Activated CD8-positive, alpha-beta memory T cell treated with anti-CD3 and anti-CD28 coated beads, Interleukin-2, amount 10 ng/mL, durations not matched to agents 7 days and 5 days (primary cell): ENCODE measurements at regions of chr1 and their contacts with region 1.

Region 1: GRCh38 chr1:27979151-27979858 is 19.5 kb downstream of the XKR8 start:
- DNase-seq: no peak
- ATAC-seq: peak; percentile 73
- H3K4me3 Mint-ChIP-seq: no peak overlapping the region
- H3K27ac Mint-ChIP-seq: no peak overlapping the region
- H3K4me1 Mint-ChIP-seq: peaks cover 4% of the 10 kb centered on the region
- H3K27me3 Mint-ChIP-seq: no peaks in the 10 kb centered on the region

Region 2: GRCh38 chr1:27992276-27992675 is 13.0 kb after region 1 on chr1:
- CTCF ChIA-PET with region 1: interaction called, 18 read pairs
- DNase-seq: peak; percentile 79
- ATAC-seq: peak; percentile 99
- H3K4me3 Mint-ChIP-seq: no peak overlapping the region
- H3K27ac Mint-ChIP-seq: peak overlapping the region; percentile 77
- H3K4me1 Mint-ChIP-seq: peaks cover 35% of the 10 kb centered on the region
- H3K27me3 Mint-ChIP-seq: no peaks in the 10 kb centered on the region